HepG2 (cell line): ENCODE measurements at regions of chr15 and their contacts with region 1.

Region 1: DNA sequence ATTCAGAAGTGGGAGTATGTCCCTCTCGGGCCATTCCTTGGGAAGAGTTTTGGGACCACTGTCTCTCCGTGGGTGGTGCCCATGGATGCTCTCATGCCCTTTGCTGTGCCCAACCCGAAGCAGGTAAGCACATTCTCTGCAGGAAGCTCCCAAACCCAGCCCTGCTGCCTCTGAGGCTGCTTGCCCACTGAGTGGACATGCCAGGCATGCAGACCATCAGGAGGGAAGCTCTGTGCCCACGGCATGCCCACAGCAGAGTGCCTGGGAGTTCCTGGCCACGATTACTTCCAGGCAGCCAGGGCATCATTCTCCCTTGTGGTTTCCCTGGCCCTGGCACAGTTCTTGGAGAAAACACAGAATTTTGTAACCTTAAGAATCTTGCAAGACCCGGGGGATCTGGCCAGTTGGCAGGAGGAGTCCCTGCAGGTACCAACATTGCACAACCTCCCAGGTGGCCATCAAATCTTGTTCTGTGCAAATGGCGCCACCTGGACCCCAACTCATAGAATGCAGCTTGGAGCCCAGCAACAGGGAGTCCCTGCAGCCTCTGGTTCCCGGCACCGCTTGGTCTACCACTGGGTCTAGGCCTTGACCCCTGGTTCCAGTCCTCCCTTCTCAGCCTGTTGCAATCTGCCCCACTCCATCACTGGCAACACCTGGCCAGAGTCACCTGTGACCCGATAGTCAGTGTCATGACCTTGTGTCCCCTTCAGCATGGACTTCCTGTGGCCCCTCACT is 20.4 kb downstream of the FAH start:
- DNase-seq: peak; percentile 77
- ATAC-seq: peak; percentile 75
- H3K4me3 ChIP-seq: no peak overlapping the region
- H3K27ac ChIP-seq: peak overlapping the region; percentile 54
- H3K4me1 ChIP-seq: peaks cover 26% of the 10 kb centered on the region
- H3K27me3 ChIP-seq: no peaks in the 10 kb centered on the region
- CTCF ChIP-seq: peak; percentile 95
- EP300 ChIP-seq: 0 out of 4 replicates have a peak, but pooled peaks of 1 of the 2 experiments have one; percentile 5
- POLR2A ChIP-seq: no peak
- RAD21 ChIP-seq: peak; percentile 96

Region 2: GRCh38 chr15:79702621-79703020 is 470.6 kb before region 1 on chr15:
- CTCF ChIA-PET with region 1: no interaction called
- POLR2A ChIA-PET with region 1: no interaction called
- in situ Hi-C with region 1: no loop called
- intact Hi-C with region 1: no loop called
- DNase-seq: no peak
- ATAC-seq: no peak
- H3K4me3 ChIP-seq: no peak overlapping the region
- H3K27ac ChIP-seq: no peak overlapping the region
- H3K4me1 ChIP-seq: no peaks in the 10 kb centered on the region
- H3K27me3 ChIP-seq: peaks cover 0 to 3% of the 10 kb centered on the region in 2 experiments; a peak in 1 of 5 replicates
- CTCF ChIP-seq: no peak
- EP300 ChIP-seq: no peak
- POLR2A ChIP-seq: no peak
- RAD21 ChIP-seq: no peak

Region 3: GRCh38 chr15:79765028-79765546 is 408.1 kb before region 1 on chr15:
- CTCF ChIA-PET with region 1: no interaction called
- POLR2A ChIA-PET with region 1: no interaction called
- in situ Hi-C with region 1: no loop called
- intact Hi-C with region 1: no loop called
- DNase-seq: no peak
- ATAC-seq: no peak
- H3K4me3 ChIP-seq: no peak overlapping the region
- H3K27ac ChIP-seq: no peak overlapping the region
- H3K4me1 ChIP-seq: no peaks in the 10 kb centered on the region
- H3K27me3 ChIP-seq: 0 out of 5 replicates have a peak, but pooled peaks cover 0 to 3% of the 10 kb centered on the region in 2 experiments
- CTCF ChIP-seq: no peak
- EP300 ChIP-seq: no peak
- POLR2A ChIP-seq: no peak
- RAD21 ChIP-seq: no peak

Region 4: DNA sequence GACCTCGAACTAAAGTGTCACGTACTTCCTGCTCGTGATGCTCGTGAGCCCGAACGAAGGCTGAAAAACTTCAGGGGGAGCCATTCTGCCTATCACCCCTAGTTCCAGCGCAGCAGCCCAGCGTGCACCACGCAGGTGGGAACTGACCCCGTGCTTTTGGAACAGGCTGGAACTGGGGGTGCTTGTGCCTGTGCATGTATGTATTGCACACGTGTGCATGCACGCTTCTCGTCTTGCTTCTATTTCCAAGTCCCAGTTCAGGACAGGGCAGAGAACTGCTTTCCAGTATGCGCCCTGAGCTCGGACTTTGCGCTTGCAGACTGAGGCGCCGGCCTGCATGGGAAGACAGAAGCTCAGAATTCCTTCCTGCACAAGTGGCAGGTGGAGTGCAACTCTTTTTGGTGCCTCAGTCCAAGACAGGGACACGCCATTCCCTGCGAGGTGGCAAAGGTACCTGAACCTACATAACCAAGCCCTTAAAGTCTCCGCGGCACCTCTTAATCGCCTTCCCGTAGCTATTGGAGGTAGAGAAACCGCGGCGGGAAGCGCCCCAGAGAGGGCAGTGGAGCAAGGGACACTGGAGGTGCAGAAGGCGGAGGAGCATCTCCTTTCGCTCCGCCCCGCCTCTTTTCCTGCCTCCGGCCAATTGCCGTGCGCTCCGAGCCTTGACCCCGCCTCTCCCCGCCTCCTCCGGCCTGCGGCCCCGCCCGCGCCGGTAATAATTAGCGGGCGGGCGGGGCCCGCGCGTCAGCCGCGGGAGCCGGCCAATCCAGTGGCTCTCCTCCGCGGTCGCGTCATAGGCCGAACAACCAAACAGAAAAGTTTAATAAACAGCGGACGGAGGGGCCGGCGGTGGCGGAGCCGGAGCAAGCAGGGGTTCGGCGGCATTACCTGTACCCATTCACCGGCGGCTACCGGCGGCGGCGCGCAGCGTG is 114.1 kb before region 1 on chr15 and contains the start of gene ZFAND6:
- CTCF ChIA-PET with region 1: no interaction called
- POLR2A ChIA-PET with region 1: interaction called, 15 read pairs
- in situ Hi-C with region 1: loop called (anchors 5 kb)
- intact Hi-C with region 1: loop called (anchors 2 kb)
- DNase-seq: peak; percentile 89
- ATAC-seq: peak; percentile 93
- H3K4me3 ChIP-seq: peak within 1 kb of the TSS; percentile 69 to 97 (median 77)
- H3K27ac ChIP-seq: peak within 1 kb of the TSS; percentile 94
- H3K4me1 ChIP-seq: peaks cover 37% of the 10 kb centered on the region
- H3K27me3 ChIP-seq: no peaks in the 10 kb centered on the region
- CTCF ChIP-seq: no peak; the same call in none of the 2 replicates
- EP300 ChIP-seq: no peak
- POLR2A ChIP-seq: peak; percentile 83 to 97
- RAD21 ChIP-seq: no peak
- total RNA-seq, gene ZFAND6: 84.2 and 116 TPM in 2 replicates

Region 5: GRCh38 chr15:80072285-80072994 is 100.8 kb before region 1 on chr15:
- CTCF ChIA-PET with region 1: no interaction called
- POLR2A ChIA-PET with region 1: interaction called, 3 read pairs
- in situ Hi-C with region 1: no loop called
- intact Hi-C with region 1: loop called (anchors 5 kb)
- DNase-seq: peak; percentile 91
- ATAC-seq: peak; percentile 93
- H3K4me3 ChIP-seq: peak overlapping the region; percentile 63 to 76 (median 68); a peak in 5 of 6 replicates
- H3K27ac ChIP-seq: peak overlapping the region; percentile 43
- H3K4me1 ChIP-seq: peaks cover 84% of the 10 kb centered on the region
- H3K27me3 ChIP-seq: no peaks in the 10 kb centered on the region
- CTCF ChIP-seq: no peak
- EP300 ChIP-seq: 0 out of 4 replicates have a peak, but pooled peaks of 1 of the 2 experiments have one; percentile 9
- POLR2A ChIP-seq: no peak
- RAD21 ChIP-seq: no peak

Region 6: DNA sequence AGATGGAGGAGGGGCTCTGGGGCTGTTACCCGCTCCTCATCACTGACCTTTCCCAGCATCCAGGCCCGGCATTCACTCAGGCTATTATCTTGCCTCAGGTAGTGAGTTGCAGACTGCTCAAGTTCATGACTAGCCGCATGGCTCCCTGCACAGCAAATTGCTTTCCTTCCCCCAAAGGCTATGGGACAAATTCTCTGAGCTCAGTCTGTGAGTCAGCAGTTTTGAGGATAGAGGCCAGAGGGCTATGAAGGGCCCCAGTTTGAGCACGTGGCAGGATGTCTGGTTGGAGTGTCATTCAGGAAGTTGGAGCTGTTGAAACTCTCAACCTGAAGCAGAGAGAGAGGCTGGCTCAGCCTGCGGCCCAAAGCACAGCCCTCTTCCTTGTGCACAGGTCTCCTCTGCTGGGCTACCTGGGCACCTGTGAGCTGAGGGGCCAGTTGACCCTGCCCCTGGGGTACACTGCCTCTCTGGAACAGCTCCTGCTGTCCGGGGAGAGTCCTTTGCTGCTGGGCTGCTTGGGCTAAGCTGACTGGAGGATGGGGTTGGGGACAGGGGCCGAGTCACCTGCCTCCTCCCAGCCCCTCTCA is 12.5 kb before region 1 on chr15:
- CTCF ChIA-PET with region 1: no interaction called
- POLR2A ChIA-PET with region 1: interaction called, 28 read pairs
- in situ Hi-C with region 1: no loop called
- intact Hi-C with region 1: no loop called
- DNase-seq: peak; percentile 87
- ATAC-seq: peak; percentile 82
- H3K4me3 ChIP-seq: no peak overlapping the region; a peak in 1 of 6 replicates
- H3K27ac ChIP-seq: peak overlapping the region; percentile 77
- H3K4me1 ChIP-seq: peaks cover 76% of the 10 kb centered on the region
- H3K27me3 ChIP-seq: no peaks in the 10 kb centered on the region
- CTCF ChIP-seq: no peak
- EP300 ChIP-seq: peak in 1 of 2 experiments; percentile 72; a peak in 2 of 4 replicates
- POLR2A ChIP-seq: no peak
- RAD21 ChIP-seq: no peak

Region 7: DNA sequence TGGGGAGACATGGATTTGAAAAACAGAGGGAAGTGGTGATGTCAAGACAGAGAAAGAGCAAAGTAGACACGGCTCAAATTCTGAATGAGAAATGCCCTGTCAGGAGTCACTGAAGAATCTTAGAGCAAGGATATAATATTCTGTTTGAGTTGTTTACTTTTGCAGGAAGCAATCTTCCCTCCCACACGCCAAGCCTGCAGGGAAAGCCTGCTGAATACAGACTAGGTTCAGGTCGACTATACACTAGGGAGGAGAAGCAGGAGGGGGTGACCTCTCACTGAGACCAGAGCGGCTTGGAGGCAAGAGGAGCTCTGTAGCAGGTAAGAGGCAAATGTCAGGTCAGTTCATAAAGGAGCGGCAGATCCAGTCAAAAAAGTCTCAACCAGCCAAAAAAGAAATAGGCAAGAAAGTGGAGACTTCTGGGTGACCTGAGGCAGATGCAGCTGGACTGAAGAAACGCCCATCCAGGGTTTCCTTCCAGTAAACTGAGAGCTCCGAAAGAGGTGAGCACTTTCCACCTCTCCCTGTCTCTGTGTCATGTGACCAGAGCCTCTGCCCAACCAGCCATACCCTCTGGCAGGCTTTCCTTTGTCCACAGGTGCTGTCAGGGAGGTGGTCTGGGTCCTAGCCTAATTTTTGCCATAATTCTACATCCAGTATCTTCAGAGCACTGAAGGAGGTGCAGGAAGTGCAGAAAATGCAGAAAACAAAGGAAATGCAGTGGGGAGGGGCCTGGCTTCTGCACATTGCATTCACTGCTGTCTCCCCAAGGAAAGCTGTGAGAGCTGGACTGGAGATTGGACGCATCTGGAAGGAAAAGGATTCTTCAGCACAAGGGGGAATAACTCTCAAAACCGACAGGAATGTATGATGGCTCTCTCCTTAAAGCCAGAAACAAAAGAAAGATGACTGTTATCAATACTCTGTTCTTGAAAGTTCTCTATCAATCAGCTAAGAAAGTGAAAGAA is 116.6 kb after region 1 on chr15:
- CTCF ChIA-PET with region 1: no interaction called
- POLR2A ChIA-PET with region 1: no interaction called
- in situ Hi-C with region 1: no loop called
- intact Hi-C with region 1: no loop called
- DNase-seq: no peak
- ATAC-seq: no peak
- H3K4me3 ChIP-seq: no peak overlapping the region
- H3K27ac ChIP-seq: no peak overlapping the region
- H3K4me1 ChIP-seq: peaks cover 8% of the 10 kb centered on the region; the same call in 1 of the 2 replicates
- H3K27me3 ChIP-seq: peaks cover 0 to 7% of the 10 kb centered on the region in 2 experiments; a peak in 2 of 5 replicates
- CTCF ChIP-seq: no peak
- EP300 ChIP-seq: no peak
- POLR2A ChIP-seq: no peak
- RAD21 ChIP-seq: no peak

Region 8: GRCh38 chr15:80309769-80310384 is 136.7 kb after region 1 on chr15:
- CTCF ChIA-PET with region 1: no interaction called
- POLR2A ChIA-PET with region 1: no interaction called
- in situ Hi-C with region 1: no loop called
- intact Hi-C with region 1: loop called (anchors 5 kb)
- DNase-seq: peak; percentile 24
- ATAC-seq: peak; percentile 78
- H3K4me3 ChIP-seq: no peak overlapping the region
- H3K27ac ChIP-seq: no peak overlapping the region
- H3K4me1 ChIP-seq: peaks cover 12% of the 10 kb centered on the region; the same call in 1 of the 2 replicates
- H3K27me3 ChIP-seq: peaks cover 0 to 2% of the 10 kb centered on the region in 2 experiments; a peak in 2 of 5 replicates
- CTCF ChIP-seq: peak; percentile 78
- EP300 ChIP-seq: no peak
- POLR2A ChIP-seq: no peak
- RAD21 ChIP-seq: peak; percentile 60

Region 9: GRCh38 chr15:80699981-80700380 is 526.8 kb after region 1 on chr15:
- CTCF ChIA-PET with region 1: no interaction called
- POLR2A ChIA-PET with region 1: no interaction called
- in situ Hi-C with region 1: no loop called
- intact Hi-C with region 1: no loop called
- DNase-seq: no peak
- ATAC-seq: no peak
- H3K4me3 ChIP-seq: no peak overlapping the region
- H3K27ac ChIP-seq: no peak overlapping the region
- H3K4me1 ChIP-seq: peaks cover 16% of the 10 kb centered on the region
- H3K27me3 ChIP-seq: no peaks in the 10 kb centered on the region
- CTCF ChIP-seq: no peak
- EP300 ChIP-seq: no peak
- POLR2A ChIP-seq: no peak
- RAD21 ChIP-seq: no peak